ENCODE measurements at regions of chr6 and their contacts with region 1.

Region 1: DNA sequence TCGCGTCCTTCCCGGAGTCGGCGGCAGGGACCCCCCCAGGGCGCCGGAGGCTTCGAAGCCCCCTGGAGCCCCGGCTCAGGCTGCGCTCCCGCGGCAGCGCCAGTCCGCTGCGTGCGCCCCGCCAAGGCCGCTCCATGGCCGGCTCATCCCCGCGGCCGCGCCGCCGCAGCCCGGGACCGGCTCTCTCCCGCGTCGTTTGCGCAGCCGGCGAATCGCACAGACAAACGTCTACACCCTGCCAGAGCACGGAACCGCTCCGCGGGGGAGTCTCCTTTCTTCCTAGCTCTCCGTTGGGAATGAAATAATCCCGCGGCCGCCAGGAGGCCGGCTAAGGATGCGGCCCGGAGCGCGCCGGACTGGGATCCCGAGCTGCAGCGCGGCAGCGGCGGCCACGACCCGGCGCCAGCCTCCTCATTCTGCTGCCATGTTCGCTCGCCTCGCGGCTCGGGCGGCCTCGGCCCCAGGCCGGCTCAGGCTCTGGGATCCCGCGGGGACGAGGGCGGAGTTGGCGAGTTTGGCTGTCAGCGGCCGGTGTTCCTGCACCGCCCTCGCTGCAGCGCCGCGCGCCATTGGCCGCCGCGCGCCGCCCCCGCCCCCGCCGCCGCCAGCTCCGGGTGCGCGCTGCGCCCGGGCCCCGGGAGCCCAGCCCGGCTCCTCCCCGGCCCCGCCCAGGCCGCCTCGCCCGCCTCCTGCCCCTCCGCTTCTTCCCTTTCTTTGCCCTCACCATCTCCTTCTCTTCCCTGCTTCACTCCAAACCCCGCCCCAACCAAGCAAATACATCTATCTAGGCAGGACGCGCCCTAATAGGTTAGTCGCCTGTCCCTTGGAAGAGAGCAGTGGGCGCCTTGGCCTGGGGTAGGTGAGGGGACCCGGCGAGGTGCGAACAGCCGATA is at the start of gene GFOD1:
- DNase-seq: peak; percentile 81
- ATAC-seq: peak; percentile 80
- H3K4me3 Mint-ChIP-seq: peak within 1 kb of the TSS; percentile 90
- H3K27ac Mint-ChIP-seq: peak within 1 kb of the TSS; percentile 85
- H3K4me1 Mint-ChIP-seq: peaks cover 44% of the 10 kb centered on the region
- H3K27me3 Mint-ChIP-seq: no peaks in the 10 kb centered on the region
- CTCF ChIP-seq: no peak
- total RNA-seq, gene GFOD1: 8.3 and 8.4 TPM in 2 replicates

Region 2: DNA sequence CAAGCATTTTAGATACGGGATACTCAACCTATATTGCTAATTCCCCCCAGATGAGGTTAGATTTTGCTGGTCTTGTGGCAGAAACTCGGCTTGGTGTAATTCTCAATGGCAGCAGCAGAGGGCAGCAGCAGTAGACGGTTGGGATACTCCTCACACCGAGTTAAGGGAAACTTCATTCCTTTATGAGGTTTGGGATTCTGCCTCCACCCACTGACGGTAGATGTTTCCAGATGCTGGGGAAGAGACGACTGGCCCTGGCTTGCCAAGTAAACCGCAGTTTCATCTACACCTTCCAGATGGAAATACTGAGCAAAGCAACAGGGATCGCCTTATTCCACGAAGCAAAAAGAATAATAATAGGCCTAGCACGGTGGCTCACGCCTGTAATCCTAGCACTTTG is 150.8 kb before region 1 on chr6:
- CTCF ChIA-PET with region 1: no interaction called
- POLR2A ChIA-PET with region 1: no interaction called
- intact Hi-C with region 1: loop called (anchors 1 kb)
- DNase-seq: peak; percentile 72
- ATAC-seq: peak; percentile 73
- H3K4me3 Mint-ChIP-seq: no peak overlapping the region
- H3K27ac Mint-ChIP-seq: no peak overlapping the region
- H3K4me1 Mint-ChIP-seq: peaks cover 51% of the 10 kb centered on the region
- H3K27me3 Mint-ChIP-seq: no peaks in the 10 kb centered on the region
- CTCF ChIP-seq: no peak

Region 3: DNA sequence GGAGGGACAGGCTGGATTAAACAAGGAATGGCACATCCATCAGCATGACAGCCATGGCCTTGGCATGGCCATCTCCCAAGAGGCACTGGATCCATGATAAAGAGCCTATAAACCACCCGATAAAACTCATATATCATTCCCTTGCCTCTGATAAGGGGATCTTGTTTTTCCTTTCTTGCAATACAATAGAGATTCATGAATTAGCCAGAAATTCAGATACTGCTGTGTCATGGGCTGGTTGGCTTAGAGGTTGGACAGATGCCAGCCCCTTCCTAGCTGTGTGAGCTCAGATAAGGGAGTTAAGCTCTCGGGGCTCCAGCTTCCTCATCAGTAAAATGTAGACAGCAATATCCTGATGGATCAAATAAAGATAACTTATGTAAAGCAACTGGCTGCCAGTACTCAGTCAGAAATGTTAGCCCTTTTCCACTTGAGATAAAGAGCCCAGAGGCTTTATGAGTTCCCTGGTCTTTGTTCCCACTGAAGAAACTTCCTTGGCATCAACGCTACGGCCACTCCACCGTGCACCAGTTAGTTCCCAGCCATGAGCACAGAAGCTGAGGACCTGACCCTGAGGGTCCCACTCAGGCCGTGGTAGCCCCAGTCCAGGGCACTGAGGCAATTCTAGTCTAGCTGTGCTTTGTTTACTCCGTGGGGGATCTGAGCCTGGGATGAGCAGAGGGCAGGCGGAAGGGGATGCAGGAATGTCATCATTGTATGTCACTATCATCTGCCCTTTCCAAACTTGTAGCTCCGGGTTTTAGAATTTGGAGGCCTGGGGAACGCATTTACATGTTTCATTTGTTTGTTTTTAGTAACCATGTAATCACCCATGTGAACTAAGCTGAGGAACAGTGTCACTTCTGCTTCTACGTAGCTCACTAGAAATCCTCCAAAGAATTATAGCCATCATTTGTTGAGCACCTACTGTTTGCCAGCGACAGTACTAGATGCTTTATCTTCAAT is 91.8 kb before region 1 on chr6:
- CTCF ChIA-PET with region 1: no interaction called
- POLR2A ChIA-PET with region 1: interaction called, 3 read pairs
- intact Hi-C with region 1: loop called (anchors 1 kb)
- DNase-seq: no peak
- ATAC-seq: peak; percentile 62
- H3K4me3 Mint-ChIP-seq: peak overlapping the region; percentile 47
- H3K27ac Mint-ChIP-seq: peak overlapping the region; percentile 91
- H3K4me1 Mint-ChIP-seq: peaks cover 56% of the 10 kb centered on the region
- H3K27me3 Mint-ChIP-seq: no peaks in the 10 kb centered on the region
- CTCF ChIP-seq: no peak

Region 4: GRCh38 chr6:13454286-13455221 is 32.8 kb before region 1 on chr6:
- CTCF ChIA-PET with region 1: interaction called, 5 read pairs
- POLR2A ChIA-PET with region 1: interaction called, 6 read pairs
- intact Hi-C with region 1: loop called (anchors 1 kb)
- DNase-seq: peak; percentile 37
- ATAC-seq: peak; percentile 81
- H3K4me3 Mint-ChIP-seq: peak overlapping the region; percentile 65
- H3K27ac Mint-ChIP-seq: peak overlapping the region; percentile 85
- H3K4me1 Mint-ChIP-seq: peaks cover 60% of the 10 kb centered on the region
- H3K27me3 Mint-ChIP-seq: no peaks in the 10 kb centered on the region
- CTCF ChIP-seq: no peak

Region 5: GRCh38 chr6:13538084-13538483 is 50.7 kb after region 1 on chr6:
- CTCF ChIA-PET with region 1: interaction called, 5 read pairs
- POLR2A ChIA-PET with region 1: no interaction called
- intact Hi-C with region 1: loop called (anchors 1 kb)
- DNase-seq: no peak
- ATAC-seq: peak; percentile 58
- H3K4me3 Mint-ChIP-seq: no peak overlapping the region
- H3K27ac Mint-ChIP-seq: no peak overlapping the region
- H3K4me1 Mint-ChIP-seq: peaks cover 14% of the 10 kb centered on the region
- H3K27me3 Mint-ChIP-seq: no peaks in the 10 kb centered on the region
- CTCF ChIP-seq: no peak

Region 6: GRCh38 chr6:13681305-13682061 is 194.1 kb after region 1 on chr6:
- CTCF ChIA-PET with region 1: no interaction called
- POLR2A ChIA-PET with region 1: no interaction called
- intact Hi-C with region 1: no loop called
- DNase-seq: no peak
- ATAC-seq: no peak
- H3K4me3 Mint-ChIP-seq: peak overlapping the region; percentile 20
- H3K27ac Mint-ChIP-seq: peak overlapping the region; percentile 51
- H3K4me1 Mint-ChIP-seq: peaks cover 33% of the 10 kb centered on the region
- H3K27me3 Mint-ChIP-seq: no peaks in the 10 kb centered on the region
- CTCF ChIP-seq: no peak

Region 7: GRCh38 chr6:13711733-13712598 is 224.6 kb after region 1 on chr6 and contains the start of gene RANBP9:
- CTCF ChIA-PET with region 1: interaction called, 3 read pairs
- POLR2A ChIA-PET with region 1: no interaction called
- intact Hi-C with region 1: loop called (anchors 2 kb)
- DNase-seq: peak; percentile 92
- ATAC-seq: peak; percentile 83
- H3K4me3 Mint-ChIP-seq: peak within 1 kb of the TSS; percentile 97
- H3K27ac Mint-ChIP-seq: peak within 1 kb of the TSS; percentile 99
- H3K4me1 Mint-ChIP-seq: peaks cover 44% of the 10 kb centered on the region
- H3K27me3 Mint-ChIP-seq: no peaks in the 10 kb centered on the region
- CTCF ChIP-seq: no peak
- total RNA-seq, gene RANBP9: 30.7 and 34.7 TPM in 2 replicates

Measured in activated B cell treated with CpG ODN at 0.5 μM for 24 hours (primary cell).